H1 (cell line): ENCODE measurements at regions of chr7 and their contacts with region 1.

Region 1: DNA sequence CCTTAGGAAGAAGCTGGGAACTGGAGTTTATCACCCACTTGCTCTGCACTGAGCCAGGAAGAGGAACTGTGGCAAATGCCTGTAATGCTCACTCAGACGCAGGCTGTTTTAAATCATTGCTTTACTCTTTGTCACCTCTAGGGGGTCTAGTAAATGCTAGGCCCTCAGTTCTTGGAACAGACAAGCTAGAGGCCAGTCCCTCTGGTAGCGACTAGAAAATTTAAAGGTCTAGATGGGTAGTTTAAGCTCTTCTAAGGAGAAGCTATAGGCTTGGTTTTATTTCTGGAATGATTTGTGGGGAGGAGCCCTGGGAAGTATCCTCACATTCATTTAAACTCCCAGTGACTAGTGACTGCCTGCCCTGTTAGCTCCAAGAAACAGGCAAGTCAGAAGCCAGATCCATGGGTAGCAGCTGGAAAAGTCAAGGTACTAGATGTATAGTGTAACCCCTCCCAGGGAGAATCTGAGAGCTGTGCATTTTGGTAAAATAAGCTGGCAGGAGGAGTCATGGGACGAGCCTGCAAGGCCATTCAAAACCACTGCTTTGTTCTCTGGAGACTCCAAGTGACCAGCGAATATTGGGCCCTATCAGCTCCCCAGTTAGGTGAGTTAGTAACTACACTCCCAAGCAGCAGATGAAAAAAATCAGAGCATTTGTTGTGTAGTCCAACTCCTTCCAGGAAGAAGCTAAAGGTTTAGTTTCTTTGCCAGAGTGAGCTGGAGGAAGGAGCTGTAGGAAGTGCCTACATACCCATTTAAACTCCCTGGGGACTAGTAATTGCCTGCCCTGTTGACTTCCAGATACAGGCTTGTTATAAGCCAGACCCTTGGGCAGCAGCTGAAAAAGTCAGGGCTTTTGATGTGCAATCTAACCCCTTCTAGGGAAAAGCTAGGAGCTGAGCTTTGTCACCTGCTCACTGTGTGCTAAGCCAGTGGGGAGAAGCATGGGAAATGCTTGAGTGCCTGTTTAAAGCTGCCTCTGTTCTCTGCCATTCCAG is 68.9 kb downstream of the DYNC1I1 start:
- DNase-seq: no peak
- H3K4me3 ChIP-seq: no peak overlapping the region; a peak in 1 of 8 replicates
- H3K27ac ChIP-seq: no peak overlapping the region
- H3K4me1 ChIP-seq: peaks cover 0 to 9% (median 0%) of the 10 kb centered on the region in 4 experiments; a peak in 3 of 7 replicates
- H3K27me3 ChIP-seq: no peaks in the 10 kb centered on the region
- CTCF ChIP-seq: peak in 2 of 3 experiments; percentile 58 to 67; a peak in 3 of 4 replicates
- EP300 ChIP-seq: no peak
- POLR2A ChIP-seq: no peak
- RAD21 ChIP-seq: peak in 1 of 2 experiments; percentile 40; a peak in 1 of 4 replicates

Region 2: GRCh38 chr7:95730493-95731280 is 110.6 kb before region 1 on chr7:
- CTCF ChIA-PET with region 1: interaction called, 66 read pairs
- POLR2A ChIA-PET with region 1: no interaction called
- DNase-seq: no peak
- H3K4me3 ChIP-seq: no peak overlapping the region
- H3K27ac ChIP-seq: no peak overlapping the region
- H3K4me1 ChIP-seq: no peaks in the 10 kb centered on the region
- H3K27me3 ChIP-seq: no peaks in the 10 kb centered on the region
- CTCF ChIP-seq: no peak
- EP300 ChIP-seq: no peak
- POLR2A ChIP-seq: no peak
- RAD21 ChIP-seq: no peak

Region 3: GRCh38 chr7:95794917-95795515 is 46.2 kb before region 1 on chr7:
- CTCF ChIA-PET with region 1: interaction called, 53 read pairs
- POLR2A ChIA-PET with region 1: no interaction called
- DNase-seq: no peak
- H3K4me3 ChIP-seq: no peak overlapping the region
- H3K27ac ChIP-seq: no peak overlapping the region
- H3K4me1 ChIP-seq: no peaks in the 10 kb centered on the region
- H3K27me3 ChIP-seq: peaks cover 10 to 22% (median 17%) of the 10 kb centered on the region in 4 experiments
- CTCF ChIP-seq: peak in 2 of 3 experiments; percentile 66 to 76; a peak in 3 of 4 replicates
- EP300 ChIP-seq: no peak
- POLR2A ChIP-seq: no peak
- RAD21 ChIP-seq: peak; percentile 59 to 70

Region 4: GRCh38 chr7:95811846-95812445 is 29.3 kb before region 1 on chr7:
- CTCF ChIA-PET with region 1: interaction called, 28 read pairs
- POLR2A ChIA-PET with region 1: no interaction called
- DNase-seq: no peak
- H3K4me3 ChIP-seq: no peak overlapping the region
- H3K27ac ChIP-seq: no peak overlapping the region
- H3K4me1 ChIP-seq: no peaks in the 10 kb centered on the region
- H3K27me3 ChIP-seq: no peaks in the 10 kb centered on the region
- CTCF ChIP-seq: no peak
- EP300 ChIP-seq: no peak
- POLR2A ChIP-seq: no peak
- RAD21 ChIP-seq: no peak

Region 5: GRCh38 chr7:95828824-95829790 is 12.1 kb before region 1 on chr7:
- CTCF ChIA-PET with region 1: interaction called, 75 read pairs
- POLR2A ChIA-PET with region 1: interaction called, 8 read pairs
- DNase-seq: no peak
- H3K4me3 ChIP-seq: peak overlapping the region in 1 of 4 experiments; percentile 34; a peak in 1 of 8 replicates
- H3K27ac ChIP-seq: no peak overlapping the region; the same call in 1 of the 2 replicates
- H3K4me1 ChIP-seq: peaks cover 0 to 13% (median 8%) of the 10 kb centered on the region in 4 experiments; a peak in 5 of 7 replicates
- H3K27me3 ChIP-seq: no peaks in the 10 kb centered on the region
- CTCF ChIP-seq: no peak
- EP300 ChIP-seq: no peak
- POLR2A ChIP-seq: no peak
- RAD21 ChIP-seq: no peak

Region 6: DNA sequence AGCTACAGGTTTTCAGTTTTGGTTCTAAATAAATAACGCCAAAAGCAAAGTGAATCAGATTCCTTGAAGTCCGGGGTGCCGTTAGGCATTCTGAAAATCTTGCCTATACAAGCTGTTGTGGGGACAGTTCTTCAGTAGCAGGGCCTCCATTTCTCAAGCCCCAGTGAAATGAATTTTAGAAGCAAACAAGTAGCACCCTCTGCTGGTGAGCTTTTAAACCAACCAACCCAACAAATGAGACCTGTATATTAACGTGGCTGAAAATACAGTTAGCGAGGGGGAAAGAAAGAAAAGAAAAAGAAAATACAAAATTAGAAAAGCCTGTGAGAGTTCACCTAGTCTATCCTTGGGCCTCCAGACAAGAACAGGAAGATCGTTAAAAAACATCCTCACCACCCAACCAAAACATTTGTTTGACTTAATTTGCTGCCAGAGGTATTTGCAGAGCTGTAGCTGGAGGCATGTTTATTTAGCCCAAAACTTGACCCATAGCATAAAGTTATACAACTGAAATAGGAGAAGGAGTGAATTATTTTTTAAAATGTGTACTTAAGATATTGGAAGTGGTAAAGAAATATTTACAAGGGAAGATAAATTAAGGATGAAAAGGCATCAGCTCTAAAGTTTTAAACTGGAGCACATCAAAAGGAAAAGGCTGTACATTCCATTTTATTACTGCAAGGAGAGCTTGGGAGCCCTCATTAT is 30.0 kb after region 1 on chr7:
- CTCF ChIA-PET with region 1: interaction called, 174 read pairs
- POLR2A ChIA-PET with region 1: no interaction called
- DNase-seq: peak in 1 of 2 experiments; percentile 52
- H3K4me3 ChIP-seq: no peak overlapping the region
- H3K27ac ChIP-seq: no peak overlapping the region
- H3K4me1 ChIP-seq: no peaks in the 10 kb centered on the region
- H3K27me3 ChIP-seq: no peaks in the 10 kb centered on the region; a peak in 1 of 7 replicates
- CTCF ChIP-seq: peak in 2 of 3 experiments; percentile 60 to 71; a peak in 3 of 4 replicates
- EP300 ChIP-seq: no peak
- POLR2A ChIP-seq: no peak
- RAD21 ChIP-seq: peak; percentile 86 to 92

Region 7: GRCh38 chr7:95893484-95893883 is 52.2 kb after region 1 on chr7:
- CTCF ChIA-PET with region 1: no interaction called
- POLR2A ChIA-PET with region 1: no interaction called
- DNase-seq: no peak
- H3K4me3 ChIP-seq: no peak overlapping the region
- H3K27ac ChIP-seq: no peak overlapping the region
- H3K4me1 ChIP-seq: no peaks in the 10 kb centered on the region
- H3K27me3 ChIP-seq: no peaks in the 10 kb centered on the region
- CTCF ChIP-seq: no peak
- EP300 ChIP-seq: no peak
- POLR2A ChIP-seq: no peak
- RAD21 ChIP-seq: no peak

Region 8: DNA sequence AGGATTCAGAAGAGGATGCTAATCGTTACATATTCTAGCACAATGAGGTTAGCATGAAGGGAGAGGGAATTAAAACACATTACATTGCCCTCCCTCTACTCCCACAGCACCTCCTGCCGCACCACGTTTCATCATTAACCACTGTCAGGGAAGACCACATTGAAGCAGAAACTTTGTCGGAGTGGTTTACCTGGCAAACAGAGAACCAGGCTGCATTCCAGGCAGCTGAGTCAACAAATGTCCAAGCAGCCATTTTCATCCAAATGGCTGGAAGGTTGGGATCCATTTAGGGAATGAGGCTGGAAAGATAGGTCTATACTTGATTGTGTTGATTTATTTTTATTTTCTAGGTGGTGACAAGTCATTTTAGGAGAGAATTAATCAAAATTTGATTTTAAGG is 204.7 kb after region 1 on chr7:
- CTCF ChIA-PET with region 1: no interaction called
- POLR2A ChIA-PET with region 1: no interaction called
- DNase-seq: no peak
- H3K4me3 ChIP-seq: no peak overlapping the region
- H3K27ac ChIP-seq: no peak overlapping the region
- H3K4me1 ChIP-seq: no peaks in the 10 kb centered on the region
- H3K27me3 ChIP-seq: no peaks in the 10 kb centered on the region
- CTCF ChIP-seq: no peak
- EP300 ChIP-seq: no peak
- POLR2A ChIP-seq: no peak
- RAD21 ChIP-seq: no peak